Aorta (tissue), 5 donors: ENCODE measurements at regions of chr3 and their contacts with region 1.

Region 1: GRCh38 chr3:30934208-30934550 is 39.7 kb upstream of the GADL1 start:
- DNase-seq: no peak
- ATAC-seq: peak; percentile 70
- H3K4me3 ChIP-seq: peak overlapping the region; percentile 34 to 60
- H3K27ac ChIP-seq: no peak overlapping the region
- H3K4me1 ChIP-seq: no peaks in the 10 kb centered on the region
- H3K27me3 ChIP-seq: no peaks in the 10 kb centered on the region

Region 2: DNA sequence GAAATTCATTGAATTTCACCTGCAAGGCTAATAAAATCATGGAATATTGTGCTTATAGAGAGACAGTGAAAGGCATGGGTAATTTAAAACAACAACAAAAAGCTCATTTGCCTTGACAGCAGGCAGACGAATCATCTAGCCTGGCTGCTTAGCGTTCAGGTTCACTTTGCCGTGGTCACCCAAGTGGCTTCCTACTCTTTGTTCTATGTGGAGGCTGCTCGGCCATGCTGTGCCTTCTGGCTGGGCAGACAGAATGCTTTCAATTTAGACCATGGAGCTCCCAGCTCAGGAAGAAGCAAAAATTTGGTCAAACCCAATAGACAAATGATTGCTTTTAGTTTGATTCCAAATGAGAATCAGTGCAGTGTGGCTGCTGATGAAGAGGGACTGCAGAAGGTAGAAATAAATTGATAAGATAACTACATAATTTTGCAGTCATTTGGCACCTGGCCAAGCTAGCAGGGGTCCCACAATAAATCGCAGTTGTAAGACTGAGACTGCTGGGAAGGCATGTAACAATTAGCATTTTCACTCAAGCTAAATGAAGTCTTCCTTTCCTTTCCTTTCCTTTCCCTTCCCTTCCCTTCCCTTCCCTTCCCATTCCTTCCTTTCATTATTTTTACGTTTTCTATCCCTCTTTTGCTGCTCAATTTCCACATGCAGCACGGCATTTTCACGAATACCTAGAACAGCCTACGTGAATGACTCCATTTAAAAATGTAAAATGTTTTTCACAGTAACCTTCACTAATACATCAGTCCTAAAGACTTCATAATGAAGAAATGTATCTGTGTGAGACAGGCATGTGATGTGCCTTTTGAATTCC is 688.2 kb before region 1 on chr3:
- intact Hi-C with region 1: no loop called
- DNase-seq: no peak
- ATAC-seq: no peak
- H3K4me3 ChIP-seq: no peak overlapping the region
- H3K27ac ChIP-seq: no peak overlapping the region
- H3K4me1 ChIP-seq: peaks cover 0 to 4% of the 10 kb centered on the region in 2 donors
- H3K27me3 ChIP-seq: no peaks in the 10 kb centered on the region

Region 3: DNA sequence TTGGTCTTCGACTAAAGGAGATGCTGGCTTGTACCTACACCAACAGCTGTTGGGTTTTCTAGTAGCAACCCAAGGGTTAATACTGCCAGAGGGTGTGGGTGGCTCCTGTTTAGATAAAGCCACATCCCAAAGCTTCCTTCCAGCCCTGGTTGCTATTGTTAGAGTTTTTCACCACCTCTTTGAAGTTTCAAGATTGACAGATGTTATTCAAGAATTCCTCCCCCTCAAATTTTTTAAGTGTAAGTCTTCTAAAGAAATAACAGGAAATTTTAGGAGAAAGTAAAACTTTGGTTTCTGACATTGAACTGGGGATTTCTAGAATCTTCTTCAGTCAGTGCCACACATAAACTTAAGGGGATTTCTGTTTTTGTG is 266.9 kb before region 1 on chr3:
- intact Hi-C with region 1: no loop called
- DNase-seq: no peak
- ATAC-seq: no peak
- H3K4me3 ChIP-seq: no peak overlapping the region
- H3K27ac ChIP-seq: no peak overlapping the region
- H3K4me1 ChIP-seq: peaks cover 0 to 5% of the 10 kb centered on the region in 2 donors
- H3K27me3 ChIP-seq: no peaks in the 10 kb centered on the region

Region 4: DNA sequence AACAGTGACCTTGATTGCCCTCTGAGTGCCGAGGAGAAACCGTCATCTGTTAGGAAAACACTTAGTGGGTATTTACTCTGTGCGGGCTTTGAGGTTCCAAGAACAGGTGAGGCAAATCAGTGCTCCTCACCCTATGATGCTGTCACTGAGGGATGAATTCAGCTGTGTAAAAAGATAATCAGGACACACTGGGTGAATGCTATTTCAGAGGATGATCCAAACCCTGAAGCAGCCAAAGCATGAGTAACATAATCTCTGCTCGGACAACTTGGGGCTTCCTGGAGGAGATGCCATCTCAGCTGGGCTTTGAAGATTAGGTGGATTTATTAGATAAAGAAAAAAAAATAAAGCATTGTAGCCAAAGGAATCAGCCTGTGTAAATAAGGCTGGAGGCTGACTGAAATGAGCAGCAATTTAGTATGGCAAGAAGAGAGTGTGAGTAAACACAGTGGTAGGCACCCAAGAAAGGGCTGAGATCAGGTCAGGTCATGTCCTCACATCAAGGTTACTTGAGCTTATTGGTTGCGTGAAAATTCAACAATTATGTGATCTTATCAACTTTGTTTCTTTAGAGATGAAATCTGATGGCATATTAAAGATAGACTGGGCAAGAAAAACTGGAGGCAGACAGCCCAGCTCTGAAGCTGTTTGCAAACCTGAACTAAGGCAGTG is 29.1 kb before region 1 on chr3:
- intact Hi-C with region 1: no loop called
- DNase-seq: no peak
- ATAC-seq: no peak
- H3K4me3 ChIP-seq: no peak overlapping the region
- H3K27ac ChIP-seq: no peak overlapping the region
- H3K4me1 ChIP-seq: peaks cover 0 to 2% of the 10 kb centered on the region in 2 donors
- H3K27me3 ChIP-seq: no peaks in the 10 kb centered on the region

Region 5: DNA sequence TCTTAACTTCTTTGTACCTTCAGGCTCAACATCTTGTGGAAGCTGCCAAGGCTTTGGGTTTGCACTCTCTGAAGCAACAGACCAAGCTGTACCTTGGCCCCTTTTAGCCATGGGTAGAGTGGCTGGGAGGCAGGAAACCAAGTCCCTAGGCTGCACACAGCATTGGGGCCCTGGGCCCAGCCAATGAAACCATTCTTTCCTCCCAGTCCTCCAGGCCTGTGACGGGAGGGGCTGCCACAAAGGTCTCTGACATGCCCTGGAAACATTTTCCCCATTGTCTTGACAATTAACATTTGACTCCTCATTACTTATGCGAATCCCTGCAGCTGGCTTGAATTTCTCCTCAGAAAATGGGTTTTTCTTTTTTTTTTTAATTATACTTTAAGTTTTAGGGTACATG is 213.4 kb after region 1 on chr3:
- intact Hi-C with region 1: no loop called
- DNase-seq: no peak
- ATAC-seq: no peak
- H3K4me3 ChIP-seq: no peak overlapping the region
- H3K27ac ChIP-seq: no peak overlapping the region
- H3K4me1 ChIP-seq: no peaks in the 10 kb centered on the region
- H3K27me3 ChIP-seq: no peaks in the 10 kb centered on the region

Region 6: GRCh38 chr3:31407665-31408064 is 473.5 kb after region 1 on chr3:
- intact Hi-C with region 1: loop called in 1 of 2 experiments (anchors 10 kb)
- DNase-seq: no peak
- ATAC-seq: no peak
- H3K4me3 ChIP-seq: no peak overlapping the region
- H3K27ac ChIP-seq: no peak overlapping the region
- H3K4me1 ChIP-seq: peaks cover 0 to 4% of the 10 kb centered on the region in 2 donors
- H3K27me3 ChIP-seq: no peaks in the 10 kb centered on the region